Activated CD4-positive, alpha-beta T cell treated with anti-CD3 and anti-CD28 coated beads for 36 hours (primary cell): ENCODE measurements at regions of chr1 and their contacts with region 1.

Region 1: GRCh38 chr1:27979151-27979858 is 19.5 kb downstream of the XKR8 start:
- DNase-seq: no peak
- ATAC-seq: peak; percentile 90
- H3K4me3 Mint-ChIP-seq: no peak overlapping the region
- H3K27ac Mint-ChIP-seq: peak overlapping the region; percentile 34
- H3K4me1 Mint-ChIP-seq: no peaks in the 10 kb centered on the region
- H3K27me3 Mint-ChIP-seq: no peaks in the 10 kb centered on the region

Region 2: DNA sequence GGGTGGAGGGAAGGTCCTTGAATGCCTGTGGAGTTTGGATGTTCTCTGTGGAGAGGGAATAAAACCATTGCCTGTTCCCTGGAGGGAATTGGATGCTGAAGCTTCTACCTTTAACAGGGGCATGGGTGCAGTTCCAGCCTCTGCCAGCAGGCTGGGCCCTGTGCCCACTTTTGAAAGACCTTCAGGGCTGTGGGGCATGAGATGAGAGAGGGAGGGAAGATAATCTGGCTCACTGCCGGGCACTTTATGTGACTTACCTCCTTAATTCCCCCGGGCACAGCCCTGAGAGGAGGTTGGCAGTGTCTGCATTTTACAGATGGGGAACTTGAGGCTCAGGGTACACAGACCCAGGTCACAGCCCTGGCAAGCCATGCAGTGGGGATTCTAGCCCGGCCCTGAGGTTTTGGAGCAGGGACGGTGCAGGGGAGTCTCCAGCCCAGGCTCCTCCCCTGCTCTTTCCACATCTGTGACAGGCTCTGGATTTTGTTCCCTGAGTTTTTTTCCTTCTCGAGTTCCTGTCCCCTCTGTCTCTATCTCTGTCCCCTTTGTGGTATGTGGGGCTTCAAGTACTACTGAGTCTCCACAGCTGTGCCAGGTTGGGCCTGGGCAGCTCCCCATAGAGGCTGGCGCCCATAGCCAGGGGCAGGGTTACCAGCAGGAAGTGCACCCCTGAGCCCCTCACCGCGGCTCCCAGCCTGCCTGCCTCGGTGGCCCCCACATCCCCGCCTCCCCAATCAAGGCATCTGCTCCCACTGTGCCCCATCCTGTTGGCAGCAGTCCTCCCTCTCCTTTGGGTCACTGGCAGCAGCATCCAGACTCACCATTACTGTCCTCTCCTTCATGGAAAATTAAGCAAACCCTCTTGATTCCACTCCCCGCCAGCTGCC is 121.0 kb before region 1 on chr1:
- CTCF ChIA-PET with region 1: interaction called, 21 read pairs
- POLR2A ChIA-PET with region 1: no interaction called
- intact Hi-C with region 1: loop called (anchors 1 to 2 kb)
- DNase-seq: peak; percentile 90
- ATAC-seq: peak; percentile 97
- H3K4me3 Mint-ChIP-seq: no peak overlapping the region
- H3K27ac Mint-ChIP-seq: no peak overlapping the region
- H3K4me1 Mint-ChIP-seq: peaks cover 9% of the 10 kb centered on the region
- H3K27me3 Mint-ChIP-seq: no peaks in the 10 kb centered on the region

Region 3: GRCh38 chr1:27940297-27940696 is 39.0 kb before region 1 on chr1:
- CTCF ChIA-PET with region 1: interaction called, 8 read pairs
- POLR2A ChIA-PET with region 1: no interaction called
- intact Hi-C with region 1: loop called (anchors 1 kb)
- DNase-seq: peak; percentile 88
- ATAC-seq: peak; percentile 90
- H3K4me3 Mint-ChIP-seq: no peak overlapping the region
- H3K27ac Mint-ChIP-seq: peak overlapping the region; percentile 55
- H3K4me1 Mint-ChIP-seq: peaks cover 24% of the 10 kb centered on the region
- H3K27me3 Mint-ChIP-seq: peaks cover 7% of the 10 kb centered on the region